Astrocyte of the cerebellum (primary cell): ENCODE measurements at regions of chr1 and their contacts with region 1.

Region 1: GRCh38 chr1:169266133-169266532 is 101.5 kb downstream of the NME7 start:
- DNase-seq: no peak
- H3K4me3 ChIP-seq: no peak overlapping the region
- CTCF ChIP-seq: no peak

Region 2: DNA sequence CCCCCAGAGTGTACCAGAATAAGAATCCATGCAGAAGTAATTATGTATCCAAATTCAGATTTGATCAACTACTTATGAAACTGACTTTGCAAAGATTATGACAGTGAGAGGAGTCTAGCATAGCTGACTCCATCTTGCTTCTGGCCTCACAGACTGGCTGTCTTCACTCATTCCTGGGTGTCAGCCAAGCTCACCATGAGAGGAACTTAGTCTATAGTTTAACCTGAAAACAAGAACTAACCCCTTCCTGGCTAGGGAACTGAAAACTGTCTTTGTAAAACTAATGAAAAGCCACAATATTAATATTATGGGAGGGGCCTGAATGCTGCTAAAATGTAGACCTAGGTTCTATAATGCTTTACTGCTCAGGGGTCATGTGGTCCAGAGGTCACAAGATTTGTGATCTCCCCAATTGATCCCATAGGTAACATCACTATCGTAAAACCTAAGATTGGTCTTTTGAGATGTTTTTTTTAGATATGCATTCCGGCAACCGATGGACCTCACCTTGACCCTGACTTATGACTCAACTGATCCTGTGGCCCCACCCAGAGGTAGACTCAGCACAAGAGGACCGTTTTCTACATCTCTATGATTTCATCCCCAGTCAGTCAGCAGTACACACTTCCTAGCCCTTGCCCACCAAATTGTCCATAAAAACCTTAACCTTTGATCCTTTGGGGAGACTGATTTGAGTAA is 104.5 kb before region 1 on chr1:
- in situ Hi-C with region 1: loop called (anchors 5 kb)
- DNase-seq: peak; percentile 5
- H3K4me3 ChIP-seq: no peak overlapping the region
- CTCF ChIP-seq: no peak